ENCODE measurements at regions of chr1 and their contacts with region 1.

Region 1: DNA sequence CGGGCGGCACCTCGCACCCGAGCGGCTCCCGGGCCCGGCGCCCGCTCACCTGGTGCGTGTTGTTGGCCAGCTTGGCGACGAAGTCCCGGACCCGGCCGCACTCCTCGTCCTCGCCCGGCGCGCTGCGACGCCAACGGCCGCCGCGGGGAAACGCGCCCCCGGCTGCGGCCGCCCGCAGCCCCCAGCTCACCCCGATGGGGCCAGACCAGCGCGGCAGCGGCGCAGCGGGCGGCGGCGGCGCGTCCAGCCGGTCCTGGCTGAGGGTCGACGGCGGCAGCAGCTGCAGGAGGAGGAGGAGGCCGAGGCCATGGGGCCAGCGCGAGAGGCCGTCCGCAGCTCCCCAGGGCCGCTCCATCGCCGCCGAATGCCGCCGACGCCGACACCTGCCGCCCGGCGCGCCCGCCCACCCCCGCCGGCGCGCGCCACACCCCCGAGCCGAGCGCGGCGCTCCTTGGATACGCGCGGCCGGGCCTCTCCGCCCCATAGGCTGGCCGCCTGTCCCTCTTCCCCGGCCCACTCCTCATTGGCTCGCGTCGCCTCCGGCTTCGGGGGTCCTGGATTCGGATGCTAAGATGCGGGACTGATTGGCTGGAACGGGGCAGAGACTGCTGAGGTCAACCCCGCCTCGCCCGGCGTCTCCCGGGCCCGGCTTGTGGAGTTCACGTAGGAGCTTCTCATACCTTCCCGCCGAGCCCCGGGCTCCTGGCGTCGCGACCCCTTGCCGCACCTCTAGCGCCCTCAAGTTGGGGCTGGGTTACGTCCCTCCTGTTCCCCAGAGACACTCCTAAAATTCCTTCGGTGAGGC is at the start of gene SORT1:
- H3K4me3 ChIP-seq: peak within 1 kb of the TSS; percentile 67
- H3K27ac ChIP-seq: peak within 1 kb of the TSS; percentile 79; the same call in 1 of the 2 replicates
- H3K4me1 ChIP-seq: peaks cover 12% of the 10 kb centered on the region
- CTCF ChIP-seq: 0 out of 2 replicates have a peak, but pooled peaks have one; percentile 15

Region 2: DNA sequence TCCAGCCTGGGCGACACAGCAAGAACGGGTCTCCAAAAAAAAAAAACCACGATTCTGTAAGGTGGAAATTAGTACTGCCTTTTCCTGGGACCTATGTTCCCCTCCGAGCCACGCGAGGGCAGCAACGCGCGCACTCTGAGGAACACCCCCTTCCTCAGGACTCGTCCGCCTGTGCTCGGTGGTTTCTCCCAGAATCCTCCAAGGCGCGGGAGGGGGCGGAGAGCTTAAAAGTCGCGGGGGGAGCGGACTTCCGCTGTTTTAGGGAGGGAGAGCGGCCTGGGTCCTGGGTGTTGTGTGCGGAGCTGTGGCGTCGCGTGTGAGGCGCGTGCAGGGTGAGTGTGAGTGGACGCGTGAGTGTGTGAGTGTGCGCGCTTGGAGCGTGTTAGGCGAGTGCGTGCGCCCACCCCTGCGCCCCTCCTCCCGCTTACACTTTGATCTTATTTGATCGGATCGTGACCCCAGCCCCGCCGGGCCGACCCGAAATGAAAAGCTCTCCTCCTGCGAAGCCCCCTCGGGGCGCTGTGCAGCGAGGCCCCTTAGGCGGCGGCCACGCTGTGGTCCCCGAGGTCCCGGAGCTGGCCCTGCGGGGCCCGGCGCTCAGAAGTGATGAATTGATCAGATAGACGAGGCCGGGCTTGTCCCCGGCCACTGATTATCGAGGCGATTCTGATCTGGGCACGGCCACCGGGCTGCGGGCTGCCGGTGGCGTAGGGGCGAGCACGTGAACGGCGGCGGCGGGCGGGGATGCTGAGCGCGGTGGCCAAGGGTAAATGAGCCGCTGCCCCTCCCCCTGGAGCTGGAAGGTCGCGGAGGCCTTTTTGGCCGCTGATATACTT is 297.6 kb before region 1 on chr1:
- CTCF ChIA-PET with region 1: interaction called, 8 read pairs
- POLR2A ChIA-PET with region 1: interaction called, 10 read pairs
- H3K4me3 ChIP-seq: peak overlapping the region; percentile 82
- H3K27ac ChIP-seq: peak overlapping the region; percentile 86
- H3K4me1 ChIP-seq: no peaks in the 10 kb centered on the region
- CTCF ChIP-seq: peak; percentile 91

Region 3: GRCh38 chr1:109248797-109249642 is 148.7 kb before region 1 on chr1 and contains the start of gene CELSR2:
- CTCF ChIA-PET with region 1: interaction called, 11 read pairs
- POLR2A ChIA-PET with region 1: interaction called, 12 read pairs
- H3K4me3 ChIP-seq: peak within 1 kb of the TSS; percentile 45
- H3K27ac ChIP-seq: peak within 1 kb of the TSS; percentile 65; the same call in 1 of the 2 replicates
- H3K4me1 ChIP-seq: peaks cover 5% of the 10 kb centered on the region; the same call in 1 of the 2 replicates
- CTCF ChIP-seq: no peak; the same call in 1 of the 2 replicates

Region 4: GRCh38 chr1:109277434-109278204 is 120.1 kb before region 1 on chr1:
- CTCF ChIA-PET with region 1: interaction called, 126 read pairs
- POLR2A ChIA-PET with region 1: interaction called, 30 read pairs
- H3K4me3 ChIP-seq: no peak overlapping the region
- H3K27ac ChIP-seq: no peak overlapping the region
- H3K4me1 ChIP-seq: peaks cover 10% of the 10 kb centered on the region
- CTCF ChIP-seq: peak; percentile 89

Region 5: GRCh38 chr1:109327285-109327684 is 70.5 kb before region 1 on chr1:
- CTCF ChIA-PET with region 1: interaction called, 6 read pairs
- POLR2A ChIA-PET with region 1: interaction called, 10 read pairs
- H3K4me3 ChIP-seq: no peak overlapping the region
- H3K27ac ChIP-seq: no peak overlapping the region
- H3K4me1 ChIP-seq: no peaks in the 10 kb centered on the region
- CTCF ChIP-seq: no peak

Region 6: DNA sequence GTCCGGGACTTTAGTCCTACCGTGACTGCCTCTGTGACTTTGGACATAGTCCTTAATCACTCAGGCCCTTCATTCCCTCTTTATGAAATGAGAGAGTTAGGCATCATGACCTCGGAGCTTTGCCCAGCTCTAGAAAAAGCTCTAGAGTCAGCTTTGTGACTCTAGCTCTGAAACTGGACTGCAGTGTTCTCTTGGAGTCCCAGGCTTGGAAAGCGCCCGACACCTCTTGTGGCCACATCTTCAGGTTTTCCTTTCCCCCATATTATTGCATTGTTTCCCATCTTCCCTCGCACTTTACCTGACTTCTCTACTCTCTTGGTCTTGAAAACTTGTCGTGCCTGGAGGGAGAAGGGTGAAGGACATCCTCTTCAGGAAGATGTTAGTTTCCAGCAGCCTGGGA is 124.3 kb after region 1 on chr1:
- CTCF ChIA-PET with region 1: no interaction called
- POLR2A ChIA-PET with region 1: no interaction called
- H3K4me3 ChIP-seq: no peak overlapping the region
- H3K27ac ChIP-seq: no peak overlapping the region
- H3K4me1 ChIP-seq: no peaks in the 10 kb centered on the region
- CTCF ChIP-seq: no peak

Region 7: GRCh38 chr1:109532365-109533136 is 134.8 kb after region 1 on chr1:
- CTCF ChIA-PET with region 1: interaction called, 55 read pairs
- POLR2A ChIA-PET with region 1: no interaction called
- H3K4me3 ChIP-seq: no peak overlapping the region
- H3K27ac ChIP-seq: no peak overlapping the region
- H3K4me1 ChIP-seq: no peaks in the 10 kb centered on the region
- CTCF ChIP-seq: peak; percentile 82

Measured in HEK293 (cell line).